ENCODE measurements at regions of chr1 and their contacts with region 1.

Region 1: DNA sequence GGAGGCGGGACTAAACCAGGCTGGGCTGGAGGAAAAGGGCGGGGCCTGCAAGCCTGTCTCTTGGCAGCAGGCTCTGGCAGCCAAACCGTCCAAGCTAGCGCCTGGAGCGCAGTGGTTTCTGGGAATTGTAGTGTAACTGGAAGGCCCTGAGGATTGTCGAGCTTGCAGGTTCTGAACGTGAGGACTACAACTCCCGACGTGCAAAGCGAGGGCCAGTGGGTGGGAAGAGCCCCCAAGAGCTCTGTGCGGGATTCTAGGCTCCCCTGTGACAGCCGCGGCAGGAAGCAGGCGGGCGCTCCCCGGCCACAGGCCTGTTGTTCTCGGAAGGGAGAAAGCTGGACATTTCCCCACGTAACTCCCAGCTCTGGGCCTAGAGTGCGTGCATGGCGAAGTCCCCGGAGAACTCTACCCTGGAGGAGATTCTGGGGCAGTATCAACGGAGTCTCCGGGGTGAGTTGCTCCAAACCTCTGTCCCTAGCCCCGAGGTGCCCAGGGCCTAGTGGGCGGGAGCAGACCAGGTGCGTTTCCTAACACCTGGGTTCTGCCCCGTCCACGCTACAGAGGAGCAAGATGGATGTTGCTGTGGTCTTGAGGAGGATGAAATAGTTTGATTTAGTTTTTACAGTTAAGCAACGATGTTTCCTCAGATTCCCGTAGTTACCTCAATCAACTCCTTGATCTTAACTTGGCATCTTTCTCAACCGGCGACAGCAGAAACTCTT is at the start of gene SDCCAG8:
- DNase-seq: peak; percentile 83
- ATAC-seq: peak; percentile 80
- H3K4me3 Mint-ChIP-seq: peak within 1 kb of the TSS; percentile 95
- H3K27ac Mint-ChIP-seq: peak within 1 kb of the TSS; percentile 98
- H3K4me1 Mint-ChIP-seq: peaks cover 41% of the 10 kb centered on the region
- H3K27me3 Mint-ChIP-seq: no peaks in the 10 kb centered on the region
- CTCF ChIP-seq: no peak
- total RNA-seq, gene SDCCAG8: 33.4 and 41.2 TPM in 2 replicates

Region 2: DNA sequence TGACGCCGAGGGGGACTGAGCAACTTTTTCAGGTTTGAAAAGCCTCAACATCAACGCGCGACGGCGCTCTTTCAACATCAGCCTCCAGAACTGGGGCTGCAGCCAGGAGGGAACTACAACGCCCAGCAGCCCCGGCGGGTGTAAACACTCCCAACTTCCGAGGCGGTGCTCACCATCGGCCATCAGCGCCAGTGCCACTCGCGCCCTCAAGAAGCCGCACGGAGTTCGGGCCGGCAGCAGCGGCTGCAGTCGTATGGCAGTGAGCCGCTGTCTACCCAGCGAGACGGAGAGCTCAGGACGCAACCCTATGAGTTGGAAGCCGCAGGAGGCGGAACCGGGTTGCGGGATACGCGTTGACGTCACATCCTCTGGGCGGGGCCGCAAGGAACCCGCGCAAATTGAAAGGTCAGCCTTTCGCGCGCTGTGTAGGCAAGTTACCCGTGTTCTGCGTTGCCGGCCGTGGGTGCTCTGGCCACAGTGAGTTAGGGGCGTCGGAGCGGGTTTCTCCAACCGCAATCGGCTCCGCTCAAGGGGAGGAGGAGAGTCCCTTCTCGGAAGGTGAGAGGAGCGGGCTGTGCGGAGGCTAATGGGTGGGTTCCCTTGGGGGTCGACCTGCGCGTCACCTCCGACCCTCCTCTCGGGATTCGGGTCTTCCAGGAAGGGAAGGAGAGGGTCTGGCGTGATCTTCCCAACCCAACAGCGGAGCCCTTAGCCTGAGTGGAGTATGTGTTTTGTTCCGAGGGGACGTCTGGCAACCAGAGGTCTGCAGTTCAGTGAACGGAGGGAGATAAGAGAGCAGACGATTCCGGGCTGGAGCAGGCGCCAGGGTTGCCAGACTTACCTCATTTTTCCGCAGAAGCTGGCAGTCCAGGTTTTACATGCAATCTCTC is 1407.9 kb before region 1 on chr1 and contains the start of gene EXO1:
- CTCF ChIA-PET with region 1: no interaction called
- POLR2A ChIA-PET with region 1: no interaction called
- intact Hi-C with region 1: loop called (anchors 2 kb)
- DNase-seq: peak; percentile 91
- ATAC-seq: peak; percentile 98
- H3K4me3 Mint-ChIP-seq: peak within 1 kb of the TSS; percentile 100
- H3K27ac Mint-ChIP-seq: peak within 1 kb of the TSS; percentile 99
- H3K4me1 Mint-ChIP-seq: peaks cover 15% of the 10 kb centered on the region
- H3K27me3 Mint-ChIP-seq: no peaks in the 10 kb centered on the region
- CTCF ChIP-seq: no peak
- total RNA-seq, gene EXO1: 2.3 TPM in 2 replicates

Region 3: GRCh38 chr1:243273945-243274344 is 18.0 kb after region 1 on chr1:
- CTCF ChIA-PET with region 1: no interaction called
- POLR2A ChIA-PET with region 1: interaction called, 24 read pairs
- intact Hi-C with region 1: loop called (anchors 1 kb)
- DNase-seq: no peak
- ATAC-seq: no peak
- H3K4me3 Mint-ChIP-seq: no peak overlapping the region
- H3K27ac Mint-ChIP-seq: no peak overlapping the region
- H3K4me1 Mint-ChIP-seq: peaks cover 18% of the 10 kb centered on the region
- H3K27me3 Mint-ChIP-seq: no peaks in the 10 kb centered on the region
- CTCF ChIP-seq: no peak

Region 4: DNA sequence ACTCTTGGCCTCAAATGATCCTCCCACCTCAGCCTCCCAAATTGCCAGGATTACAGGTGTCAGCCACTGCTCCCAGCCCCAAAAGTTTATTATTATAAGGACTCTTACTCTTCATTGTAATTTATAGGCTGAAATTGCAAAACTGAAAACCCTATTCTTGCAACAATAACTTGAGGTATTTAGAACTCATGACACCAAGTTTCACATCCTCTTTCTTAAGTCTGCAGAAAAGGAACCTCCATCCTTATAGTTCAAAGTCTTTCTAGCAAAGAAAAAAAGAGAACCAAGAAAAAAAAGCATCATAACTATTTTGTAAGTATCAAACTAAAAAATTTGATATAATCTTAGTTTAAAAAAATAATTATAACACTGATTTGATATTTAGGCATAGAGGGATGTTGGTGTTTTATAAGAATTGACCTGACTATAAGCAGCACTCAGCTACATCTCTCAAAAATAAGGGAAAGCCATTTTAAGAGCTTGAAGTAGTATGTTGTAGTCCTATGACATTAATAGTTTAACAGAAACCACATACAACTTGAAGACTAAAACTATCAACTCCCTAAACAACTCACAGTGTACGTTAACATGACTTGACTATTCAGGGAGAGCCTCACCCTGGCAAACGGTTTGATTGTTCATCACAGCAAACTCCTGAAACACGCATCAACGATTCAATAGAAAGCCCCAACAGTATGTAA is 471.7 kb after region 1 on chr1:
- CTCF ChIA-PET with region 1: no interaction called
- POLR2A ChIA-PET with region 1: no interaction called
- intact Hi-C with region 1: loop called (anchors 1 kb)
- DNase-seq: peak; percentile 20
- ATAC-seq: peak; percentile 86
- H3K4me3 Mint-ChIP-seq: peak overlapping the region; percentile 39
- H3K27ac Mint-ChIP-seq: peak overlapping the region; percentile 76
- H3K4me1 Mint-ChIP-seq: peaks cover 55% of the 10 kb centered on the region
- H3K27me3 Mint-ChIP-seq: no peaks in the 10 kb centered on the region
- CTCF ChIP-seq: no peak

Region 5: GRCh38 chr1:244297616-244298015 is 1041.7 kb after region 1 on chr1:
- CTCF ChIA-PET with region 1: no interaction called
- POLR2A ChIA-PET with region 1: interaction called, 4 read pairs
- intact Hi-C with region 1: loop called (anchors 2 kb)
- DNase-seq: no peak
- ATAC-seq: no peak
- H3K4me3 Mint-ChIP-seq: no peak overlapping the region
- H3K27ac Mint-ChIP-seq: peak overlapping the region; percentile 19
- H3K4me1 Mint-ChIP-seq: peaks cover 24% of the 10 kb centered on the region
- H3K27me3 Mint-ChIP-seq: no peaks in the 10 kb centered on the region
- CTCF ChIP-seq: no peak

Region 6: GRCh38 chr1:244835276-244836134 is 1579.6 kb after region 1 on chr1 and contains the start of gene COX20:
- CTCF ChIA-PET with region 1: no interaction called
- POLR2A ChIA-PET with region 1: no interaction called
- intact Hi-C with region 1: loop called (anchors 1 kb)
- DNase-seq: peak; percentile 95
- ATAC-seq: peak; percentile 66
- H3K4me3 Mint-ChIP-seq: peak within 1 kb of the TSS; percentile 97
- H3K27ac Mint-ChIP-seq: peak within 1 kb of the TSS; percentile 99
- H3K4me1 Mint-ChIP-seq: peaks cover 56% of the 10 kb centered on the region
- H3K27me3 Mint-ChIP-seq: no peaks in the 10 kb centered on the region
- CTCF ChIP-seq: no peak
- total RNA-seq, gene COX20: 37.1 and 37.6 TPM in 2 replicates

Measured in activated B cell treated with CpG ODN at 0.5 μM for 24 hours (primary cell).